Panc1 (cell line): ENCODE measurements at regions of chr2 and their contacts with region 1.

Region 1: GRCh38 chr2:235116885-235117492 is 165.2 kb downstream of the SH3BP4 start:
- DNase-seq: peak; percentile 25
- ATAC-seq: no peak; the same call in 1 of the 2 replicates
- H3K4me3 ChIP-seq: no peak overlapping the region
- H3K27ac ChIP-seq: peak overlapping the region; percentile 25; the same call in 1 of the 2 replicates
- H3K4me1 ChIP-seq: peaks cover 5% of the 10 kb centered on the region; the same call in 1 of the 2 replicates
- H3K27me3 ChIP-seq: no peaks in the 10 kb centered on the region
- CTCF ChIP-seq: peak; percentile 71; the same call in 1 of the 2 replicates

Region 2: GRCh38 chr2:234595829-234596228 is 521.2 kb before region 1 on chr2:
- CTCF ChIA-PET with region 1: interaction called, 10 read pairs
- POLR2A ChIA-PET with region 1: no interaction called
- in situ Hi-C with region 1: no loop called
- intact Hi-C with region 1: no loop called
- DNase-seq: no peak
- ATAC-seq: no peak
- H3K4me3 ChIP-seq: no peak overlapping the region
- H3K27ac ChIP-seq: no peak overlapping the region
- H3K4me1 ChIP-seq: no peaks in the 10 kb centered on the region
- H3K27me3 ChIP-seq: no peaks in the 10 kb centered on the region
- CTCF ChIP-seq: no peak

Region 3: DNA sequence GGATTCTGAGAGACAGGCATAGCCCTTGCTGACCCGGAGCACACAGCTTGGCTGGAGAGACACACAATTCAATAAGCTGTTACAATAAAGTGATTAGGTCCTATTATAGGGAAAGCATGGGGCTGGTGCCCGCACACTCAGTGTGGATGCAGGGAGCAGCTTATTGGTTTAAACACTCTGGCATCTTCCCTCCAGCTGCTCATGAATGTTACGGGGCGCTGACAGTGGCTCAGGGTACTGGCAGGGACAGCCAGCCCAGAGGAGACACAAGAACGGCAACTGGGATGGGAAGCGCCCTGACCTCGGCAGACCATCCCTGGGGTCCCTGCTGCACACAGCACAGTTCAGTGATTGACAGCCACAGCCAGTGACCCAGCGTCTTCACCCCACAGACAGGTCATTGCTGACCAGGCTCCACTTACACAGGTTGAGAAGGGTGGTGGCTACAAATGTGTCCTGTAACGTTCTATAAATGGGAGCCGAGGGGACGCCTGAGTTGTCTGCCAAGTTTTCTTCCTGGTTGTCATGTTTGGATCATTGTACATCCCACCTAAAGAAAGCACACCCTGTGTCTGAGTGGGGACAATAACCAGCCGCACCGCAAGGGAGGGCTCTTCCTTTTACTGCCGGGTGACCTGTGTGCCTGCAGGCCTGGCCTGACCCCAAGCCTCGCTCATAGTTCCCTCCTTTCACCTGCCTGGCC is 104.9 kb before region 1 on chr2:
- CTCF ChIA-PET with region 1: no interaction called
- POLR2A ChIA-PET with region 1: no interaction called
- in situ Hi-C with region 1: no loop called
- intact Hi-C with region 1: no loop called
- DNase-seq: no peak
- ATAC-seq: 0 out of 2 replicates have a peak, but pooled peaks have one; percentile 18
- H3K4me3 ChIP-seq: no peak overlapping the region
- H3K27ac ChIP-seq: peak overlapping the region; percentile 19; the same call in 1 of the 2 replicates
- H3K4me1 ChIP-seq: peaks cover 46% of the 10 kb centered on the region
- H3K27me3 ChIP-seq: no peaks in the 10 kb centered on the region
- CTCF ChIP-seq: no peak